ENCODE measurements at regions of chr2 and their contacts with region 1.

Region 1: GRCh38 chr2:85470850-85471800 is 52.6 kb downstream of the SH2D6 start:
- DNase-seq: no peak
- ATAC-seq: peak; percentile 49; the same call in 1 of the 2 replicates
- H3K4me3 ChIP-seq: no peak overlapping the region
- H3K27ac ChIP-seq: peak overlapping the region; percentile 75
- H3K4me1 ChIP-seq: peaks cover 26% of the 10 kb centered on the region
- H3K27me3 ChIP-seq: no peaks in the 10 kb centered on the region
- CTCF ChIP-seq: no peak

Region 2: DNA sequence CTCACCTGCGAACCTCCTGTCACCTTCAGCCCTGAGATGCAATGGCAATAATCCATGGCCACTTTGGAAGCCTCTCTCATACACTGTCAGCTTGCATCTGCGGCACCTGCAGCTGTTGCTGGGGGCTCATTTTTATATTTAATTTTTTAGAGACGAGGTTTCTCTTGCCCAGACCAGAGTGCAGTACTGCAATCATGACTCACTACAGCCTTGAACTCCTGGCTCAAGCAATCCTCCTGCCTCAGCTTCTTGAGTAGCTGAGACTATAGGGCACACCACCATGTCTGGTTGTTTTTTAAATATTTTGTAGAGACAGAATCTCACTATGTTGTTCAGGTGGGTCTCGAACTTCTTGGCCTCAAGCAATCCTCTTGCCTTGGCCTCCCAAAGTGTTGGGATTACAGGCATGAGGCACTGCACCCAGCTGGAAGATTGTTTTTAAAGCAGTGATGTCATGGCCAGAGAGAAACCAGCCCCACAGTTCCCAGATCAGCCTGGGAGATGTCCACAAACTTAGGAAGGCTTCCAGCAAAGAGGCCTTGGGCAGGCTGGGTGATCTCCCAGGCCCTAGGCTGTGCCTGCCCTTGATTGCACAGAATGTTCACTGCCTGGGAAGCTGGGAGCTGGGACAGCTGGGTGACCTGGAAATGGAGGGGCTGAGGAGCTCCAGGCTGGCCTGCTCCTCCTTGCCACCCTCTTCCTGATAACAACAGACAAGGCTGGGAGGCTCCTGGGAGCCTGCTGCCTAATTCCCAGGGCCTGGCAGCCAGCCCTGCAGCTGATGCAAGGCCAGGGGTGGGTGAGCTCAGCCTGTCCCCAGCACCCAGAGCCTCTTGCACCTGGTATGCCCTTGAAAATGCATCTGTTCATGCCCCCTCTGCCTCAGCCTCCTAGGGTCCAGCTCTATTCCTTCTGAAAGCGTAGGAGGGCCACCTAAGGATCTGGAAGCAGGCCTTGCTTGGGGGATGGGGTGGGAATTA is 25.5 kb before region 1 on chr2:
- CTCF ChIA-PET with region 1: interaction called, 16 read pairs
- POLR2A ChIA-PET with region 1: no interaction called
- in situ Hi-C with region 1: no loop called
- intact Hi-C with region 1: no loop called
- DNase-seq: no peak
- ATAC-seq: 0 out of 2 replicates have a peak, but pooled peaks have one; percentile 42
- H3K4me3 ChIP-seq: no peak overlapping the region
- H3K27ac ChIP-seq: peak overlapping the region; percentile 81; the same call in 1 of the 2 replicates
- H3K4me1 ChIP-seq: peaks cover 27% of the 10 kb centered on the region
- H3K27me3 ChIP-seq: no peaks in the 10 kb centered on the region
- CTCF ChIP-seq: no peak

Region 3: DNA sequence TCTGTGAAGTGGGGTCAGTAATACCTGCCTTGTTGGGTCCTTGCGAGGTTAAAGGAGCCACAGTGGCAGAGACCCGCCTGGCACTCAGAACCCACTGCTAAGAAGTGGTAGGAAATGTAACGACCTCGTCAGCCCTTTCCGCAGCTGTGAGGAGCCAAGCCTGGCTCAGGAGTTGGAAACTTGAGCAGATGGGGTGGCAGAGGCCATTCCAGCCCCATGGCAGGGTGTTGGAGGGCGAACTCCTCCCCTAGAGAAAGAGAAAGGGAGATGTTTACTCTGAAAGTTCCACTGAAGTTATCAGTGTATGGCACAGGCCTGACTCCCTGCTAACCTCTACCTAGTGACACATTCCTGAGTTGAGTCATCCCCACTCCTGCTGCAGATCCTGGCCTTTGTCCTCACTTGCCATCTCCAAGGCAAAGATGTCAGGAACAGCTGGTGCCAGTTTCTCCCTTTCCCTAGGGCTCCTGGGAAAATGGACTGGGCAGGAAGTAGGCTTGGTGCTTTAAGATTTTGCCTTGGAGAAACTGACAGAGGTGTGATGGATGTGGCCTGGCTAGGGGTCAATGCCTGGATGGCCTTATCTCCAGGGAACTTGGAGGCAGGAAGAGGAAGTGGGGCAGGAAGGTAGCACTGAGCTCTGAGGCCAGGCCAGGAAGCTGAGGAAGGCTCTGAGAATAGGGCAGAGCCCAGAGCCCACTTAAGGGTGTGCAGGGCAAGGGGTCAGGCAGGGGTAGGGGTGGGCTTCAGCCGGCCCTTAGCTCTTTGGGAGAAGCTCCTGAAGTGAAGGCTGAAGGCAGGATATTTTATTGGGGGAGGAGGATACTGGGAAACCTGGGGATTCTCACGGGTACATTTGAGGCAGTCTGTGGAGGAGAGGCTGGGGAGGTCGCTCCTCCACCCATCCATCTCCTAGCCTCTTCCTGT is 114.0 kb after region 1 on chr2:
- CTCF ChIA-PET with region 1: no interaction called
- POLR2A ChIA-PET with region 1: no interaction called
- in situ Hi-C with region 1: no loop called
- intact Hi-C with region 1: no loop called
- DNase-seq: peak; percentile 63
- ATAC-seq: peak; percentile 85
- H3K4me3 ChIP-seq: peak overlapping the region; percentile 27 to 53
- H3K27ac ChIP-seq: peak overlapping the region; percentile 87
- H3K4me1 ChIP-seq: peaks cover 22% of the 10 kb centered on the region
- H3K27me3 ChIP-seq: no peaks in the 10 kb centered on the region
- CTCF ChIP-seq: no peak

Measured in Panc1 (cell line).